Activated B cell treated with CpG ODN at 0.5 μM for 24 hours (primary cell): ENCODE measurements at regions of chr1 and their contacts with region 1.

Region 1: GRCh38 chr1:921011-921837 is 2.5 kb upstream of the SAMD11 start:
- DNase-seq: no peak
- ATAC-seq: peak; percentile 55
- H3K4me3 Mint-ChIP-seq: peak overlapping the region; percentile 19
- H3K27ac Mint-ChIP-seq: peak overlapping the region; percentile 6
- H3K4me1 Mint-ChIP-seq: peaks cover 21% of the 10 kb centered on the region
- H3K27me3 Mint-ChIP-seq: peaks cover 42% of the 10 kb centered on the region
- CTCF ChIP-seq: no peak

Region 2: GRCh38 chr1:832136-832535 is 89.1 kb before region 1 on chr1:
- CTCF ChIA-PET with region 1: no interaction called
- POLR2A ChIA-PET with region 1: no interaction called
- intact Hi-C with region 1: no loop called
- DNase-seq: no peak
- ATAC-seq: no peak
- H3K4me3 Mint-ChIP-seq: no peak overlapping the region
- H3K27ac Mint-ChIP-seq: no peak overlapping the region
- H3K4me1 Mint-ChIP-seq: peaks cover 5% of the 10 kb centered on the region
- H3K27me3 Mint-ChIP-seq: no peaks in the 10 kb centered on the region
- CTCF ChIP-seq: no peak

Region 3: GRCh38 chr1:966611-967300 is 45.5 kb after region 1 on chr1:
- CTCF ChIA-PET with region 1: no interaction called
- POLR2A ChIA-PET with region 1: no interaction called
- intact Hi-C with region 1: loop called (anchors 5 kb)
- DNase-seq: peak; percentile 65
- ATAC-seq: peak; percentile 91
- H3K4me3 Mint-ChIP-seq: peak overlapping the region; percentile 83
- H3K27ac Mint-ChIP-seq: no peak overlapping the region
- H3K4me1 Mint-ChIP-seq: peaks cover 8% of the 10 kb centered on the region
- H3K27me3 Mint-ChIP-seq: peaks cover 6% of the 10 kb centered on the region
- CTCF ChIP-seq: no peak

Region 4: GRCh38 chr1:1001461-1002204 is 80.4 kb after region 1 on chr1:
- CTCF ChIA-PET with region 1: no interaction called
- POLR2A ChIA-PET with region 1: no interaction called
- intact Hi-C with region 1: no loop called
- DNase-seq: peak; percentile 78
- ATAC-seq: peak; percentile 60
- H3K4me3 Mint-ChIP-seq: peak overlapping the region; percentile 75
- H3K27ac Mint-ChIP-seq: no peak overlapping the region
- H3K4me1 Mint-ChIP-seq: peaks cover 21% of the 10 kb centered on the region
- H3K27me3 Mint-ChIP-seq: peaks cover 31% of the 10 kb centered on the region
- CTCF ChIP-seq: peak; percentile 41